ENCODE measurements at regions of chr1 and their contacts with region 1.

Region 1: DNA sequence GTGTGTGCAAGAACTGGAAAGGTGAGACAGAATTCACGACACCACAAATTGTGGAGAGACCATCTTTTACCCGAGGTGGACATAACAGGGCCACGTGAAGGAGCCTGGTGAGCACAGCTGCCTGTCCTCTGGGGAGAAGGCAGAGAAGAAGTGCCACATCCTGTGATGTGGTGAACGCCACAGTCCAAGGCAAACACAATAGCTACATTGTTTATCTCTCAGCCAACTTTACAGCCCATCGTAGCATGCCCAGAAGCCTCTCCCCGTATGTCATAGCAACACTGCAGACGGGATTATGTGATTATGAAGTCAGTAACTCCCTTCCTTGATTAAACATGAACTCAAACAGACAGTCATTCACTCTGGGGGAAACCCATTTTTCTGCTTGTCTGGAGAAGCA is 612.2 kb downstream of the SMYD3 start:
- DNase-seq: no peak
- H3K4me3 ChIP-seq: no peak overlapping the region
- H3K27ac ChIP-seq: no peak overlapping the region
- H3K4me1 ChIP-seq: no peaks in the 10 kb centered on the region
- H3K27me3 ChIP-seq: no peaks in the 10 kb centered on the region
- CTCF ChIP-seq: no peak
- POLR2A ChIP-seq: no peak

Region 2: GRCh38 chr1:245173446-245174211 is 721.2 kb before region 1 on chr1:
- intact Hi-C with region 1: loop called in 1 of 2 experiments (anchors 5 kb)
- DNase-seq: no peak
- H3K4me3 ChIP-seq: no peak overlapping the region
- H3K27ac ChIP-seq: no peak overlapping the region
- H3K4me1 ChIP-seq: no peaks in the 10 kb centered on the region
- H3K27me3 ChIP-seq: no peaks in the 10 kb centered on the region
- CTCF ChIP-seq: no peak
- POLR2A ChIP-seq: no peak

Region 3: GRCh38 chr1:245807306-245807705 is 87.5 kb before region 1 on chr1:
- intact Hi-C with region 1: no loop called
- DNase-seq: no peak
- H3K4me3 ChIP-seq: no peak overlapping the region
- H3K27ac ChIP-seq: no peak overlapping the region
- H3K4me1 ChIP-seq: no peaks in the 10 kb centered on the region
- H3K27me3 ChIP-seq: no peaks in the 10 kb centered on the region
- CTCF ChIP-seq: no peak
- POLR2A ChIP-seq: no peak

Region 4: GRCh38 chr1:246002725-246003441 is 108.0 kb after region 1 on chr1:
- intact Hi-C with region 1: loop called in 1 of 2 experiments (anchors 10 kb)
- DNase-seq: peak; percentile 78 to 97 (median 90)
- H3K4me3 ChIP-seq: no peak overlapping the region
- H3K27ac ChIP-seq: no peak overlapping the region
- H3K4me1 ChIP-seq: peaks cover 0 to 6% of the 10 kb centered on the region in 2 donors
- H3K27me3 ChIP-seq: no peaks in the 10 kb centered on the region
- CTCF ChIP-seq: peak; percentile 86 to 95 (median 92)
- POLR2A ChIP-seq: no peak

Measured in adrenal gland (tissue), 19 donors.